Endothelial cell of umbilical vein (primary cell): ENCODE measurements at regions of chr22 and their contacts with region 1.

Region 1: DNA sequence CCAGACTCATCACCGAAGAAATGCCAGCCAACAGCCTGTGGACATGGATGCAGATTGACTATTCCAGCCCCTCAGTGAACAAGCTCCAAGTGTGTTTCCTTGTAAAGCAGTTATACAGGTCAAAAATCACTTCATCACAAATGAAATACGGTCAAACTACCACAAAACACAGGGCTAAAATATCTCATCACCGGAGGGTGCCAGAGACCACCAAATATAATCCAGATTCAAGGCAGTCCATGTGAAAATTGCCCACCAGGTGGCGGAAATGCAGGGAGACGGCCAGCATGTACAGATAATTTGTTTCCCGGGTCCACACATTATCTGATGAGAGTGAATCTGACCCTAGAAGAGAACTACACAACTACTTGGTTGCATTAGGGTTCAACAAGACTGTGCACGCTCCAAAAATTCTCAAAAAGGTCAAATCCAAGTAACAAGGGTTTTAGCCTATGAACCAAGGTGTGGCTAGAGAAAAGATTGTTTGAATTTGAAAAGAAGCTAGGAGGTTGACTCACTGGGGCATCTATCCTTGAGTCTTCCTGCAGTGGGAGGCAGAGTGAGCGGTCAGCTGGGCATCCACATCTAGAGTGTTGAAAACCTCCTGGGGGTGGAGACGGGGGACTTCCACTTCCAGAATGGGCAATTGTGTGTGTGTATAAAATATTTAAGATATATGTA is 71.7 kb downstream of the IGLL5 start:
- DNase-seq: peak; percentile 71
- H3K4me3 ChIP-seq: no peak overlapping the region
- H3K27ac ChIP-seq: no peak overlapping the region
- H3K4me1 ChIP-seq: no peaks in the 10 kb centered on the region
- H3K27me3 ChIP-seq: peaks cover 9 to 17% of the 10 kb centered on the region in 2 experiments
- CTCF ChIP-seq: peak; percentile 70 to 81
- POLR2A ChIP-seq: no peak

Region 2: GRCh38 chr22:22787786-22788459 is 171.4 kb before region 1 on chr22:
- CTCF ChIA-PET with region 1: interaction called, 11 read pairs
- POLR2A ChIA-PET with region 1: no interaction called
- dilution Hi-C with region 1: no loop called
- intact Hi-C with region 1: loop called (anchors 1 kb)
- DNase-seq: peak; percentile 34
- H3K4me3 ChIP-seq: no peak overlapping the region
- H3K27ac ChIP-seq: no peak overlapping the region
- H3K4me1 ChIP-seq: no peaks in the 10 kb centered on the region
- H3K27me3 ChIP-seq: peaks cover 0 to 5% of the 10 kb centered on the region in 2 experiments
- CTCF ChIP-seq: peak; percentile 80 to 91
- POLR2A ChIP-seq: no peak

Region 3: DNA sequence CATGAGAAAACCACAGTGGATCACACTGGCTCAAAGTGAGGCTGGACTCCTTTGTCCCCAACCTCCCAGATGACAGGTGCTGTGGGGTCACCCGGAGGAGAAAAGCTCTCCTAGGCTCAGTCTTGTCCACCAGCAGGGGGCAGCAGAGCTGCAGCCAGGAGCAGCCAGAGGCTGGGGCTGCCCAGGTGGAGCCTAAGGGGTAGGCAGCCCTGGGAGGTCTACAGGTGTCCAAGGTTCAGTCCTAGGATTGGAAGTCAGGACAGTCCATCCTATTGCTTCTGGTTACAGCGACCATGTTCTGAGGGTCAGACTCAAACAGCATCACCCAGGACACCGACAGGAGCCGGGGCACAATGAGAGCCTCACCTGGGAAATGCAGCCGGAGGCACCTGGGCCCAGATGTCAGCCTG is 149.3 kb before region 1 on chr22:
- CTCF ChIA-PET with region 1: interaction called, 16 read pairs
- POLR2A ChIA-PET with region 1: no interaction called
- dilution Hi-C with region 1: no loop called
- intact Hi-C with region 1: loop called (anchors 1 kb)
- DNase-seq: peak; percentile 7
- H3K4me3 ChIP-seq: no peak overlapping the region
- H3K27ac ChIP-seq: no peak overlapping the region
- H3K4me1 ChIP-seq: no peaks in the 10 kb centered on the region
- H3K27me3 ChIP-seq: peaks cover 8 to 16% of the 10 kb centered on the region in 2 experiments
- CTCF ChIP-seq: peak; percentile 80 to 82
- POLR2A ChIP-seq: no peak

Region 4: GRCh38 chr22:22855617-22856308 is 103.5 kb before region 1 on chr22:
- CTCF ChIA-PET with region 1: interaction called, 54 read pairs
- POLR2A ChIA-PET with region 1: no interaction called
- dilution Hi-C with region 1: no loop called
- intact Hi-C with region 1: no loop called
- DNase-seq: no peak
- H3K4me3 ChIP-seq: no peak overlapping the region
- H3K27ac ChIP-seq: no peak overlapping the region
- H3K4me1 ChIP-seq: no peaks in the 10 kb centered on the region
- H3K27me3 ChIP-seq: peaks cover 0 to 5% of the 10 kb centered on the region in 2 experiments
- CTCF ChIP-seq: peak; percentile 28 to 56
- POLR2A ChIP-seq: no peak

Region 5: DNA sequence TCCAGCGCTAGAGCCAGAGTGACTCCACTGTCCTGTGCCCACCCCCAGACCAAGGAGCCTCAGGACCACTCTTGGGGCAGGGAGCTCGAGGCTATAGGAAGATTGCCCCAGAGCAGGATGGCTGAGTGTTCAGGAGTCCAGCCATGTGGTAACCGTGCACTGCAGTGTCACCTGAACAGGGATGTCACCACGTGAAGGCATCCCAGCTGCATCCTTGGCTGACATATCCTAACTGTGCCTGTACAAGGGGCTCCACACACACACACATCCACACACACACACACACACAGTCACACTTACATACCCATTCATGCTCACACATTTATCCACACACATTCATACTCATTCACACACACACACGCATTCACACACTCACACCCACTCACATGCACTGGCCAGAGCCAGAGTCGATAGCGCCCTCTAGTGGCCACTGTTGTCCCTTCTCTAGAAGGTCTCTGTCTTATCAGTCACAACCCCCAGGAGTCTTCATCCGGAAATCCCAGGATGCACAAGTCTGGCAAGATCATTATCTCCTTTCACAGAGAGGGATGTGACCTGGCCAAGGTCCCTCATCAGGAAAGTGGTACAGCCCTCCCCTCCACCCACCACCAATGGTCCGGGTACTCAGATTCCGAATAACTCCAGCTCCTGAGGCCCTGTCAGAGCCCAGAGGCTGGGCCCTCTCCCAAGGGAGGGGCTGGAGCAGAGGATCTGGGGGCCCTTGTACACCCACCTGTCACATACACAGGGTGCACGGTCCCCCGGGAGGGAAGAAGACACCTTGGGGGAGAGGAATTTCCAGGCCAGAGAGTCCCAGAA is 16.6 kb before region 1 on chr22:
- CTCF ChIA-PET with region 1: interaction called, 10 read pairs
- POLR2A ChIA-PET with region 1: no interaction called
- dilution Hi-C with region 1: no loop called
- intact Hi-C with region 1: no loop called
- DNase-seq: peak; percentile 41
- H3K4me3 ChIP-seq: no peak overlapping the region
- H3K27ac ChIP-seq: no peak overlapping the region
- H3K4me1 ChIP-seq: no peaks in the 10 kb centered on the region
- H3K27me3 ChIP-seq: no peaks in the 10 kb centered on the region
- CTCF ChIP-seq: peak; percentile 81 to 83
- POLR2A ChIP-seq: no peak

Region 6: GRCh38 chr22:22976033-22976922 is 17.0 kb after region 1 on chr22:
- CTCF ChIA-PET with region 1: interaction called, 11 read pairs
- POLR2A ChIA-PET with region 1: no interaction called
- dilution Hi-C with region 1: no loop called
- intact Hi-C with region 1: no loop called
- DNase-seq: no peak
- H3K4me3 ChIP-seq: no peak overlapping the region
- H3K27ac ChIP-seq: no peak overlapping the region
- H3K4me1 ChIP-seq: no peaks in the 10 kb centered on the region
- H3K27me3 ChIP-seq: peaks cover 3 to 8% of the 10 kb centered on the region in 2 experiments
- CTCF ChIP-seq: no peak
- POLR2A ChIP-seq: no peak

Region 7: DNA sequence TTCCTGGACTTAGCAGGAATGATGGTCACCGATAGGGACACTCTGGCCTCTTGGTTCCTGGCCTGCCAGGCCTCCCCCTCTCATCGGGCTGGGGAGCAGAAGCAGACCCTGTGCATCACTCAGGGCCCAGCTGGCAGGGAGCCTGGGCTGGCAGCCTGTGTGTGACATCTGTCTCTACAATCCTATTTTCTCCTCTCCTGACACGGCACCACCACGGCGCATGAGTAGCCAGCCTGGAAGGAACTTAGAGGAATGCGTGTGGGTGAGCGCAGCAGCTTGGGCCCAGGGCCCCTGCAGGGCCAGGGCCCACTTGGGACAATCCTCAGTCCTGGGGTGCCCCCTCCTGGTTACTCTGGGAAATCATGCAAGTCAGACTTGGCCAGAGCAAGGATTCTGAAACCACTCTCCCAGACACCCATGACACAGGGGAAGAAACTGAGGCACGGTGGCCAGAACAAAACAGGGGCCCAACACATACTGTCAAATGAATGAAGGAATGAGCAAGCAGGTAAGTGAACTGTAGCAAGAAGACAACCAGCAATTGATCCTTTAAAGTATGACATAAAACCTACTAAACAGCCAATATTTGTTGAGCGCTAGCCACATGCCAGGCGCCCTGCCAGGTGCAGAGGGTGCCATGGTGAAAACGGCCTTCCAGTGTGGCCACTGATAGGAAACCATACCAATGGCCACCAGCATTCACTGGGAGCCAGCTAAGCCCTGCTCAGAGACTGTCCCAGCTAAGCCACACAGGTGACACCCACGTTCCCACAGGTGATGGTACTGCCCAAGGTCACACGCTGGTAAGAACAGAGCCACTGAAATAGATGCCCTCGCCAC is 169.2 kb after region 1 on chr22:
- CTCF ChIA-PET with region 1: interaction called, 401 read pairs
- POLR2A ChIA-PET with region 1: no interaction called
- dilution Hi-C with region 1: no loop called
- intact Hi-C with region 1: loop called (anchors 1 kb)
- DNase-seq: peak; percentile 64
- H3K4me3 ChIP-seq: no peak overlapping the region
- H3K27ac ChIP-seq: no peak overlapping the region
- H3K4me1 ChIP-seq: no peaks in the 10 kb centered on the region
- H3K27me3 ChIP-seq: peaks cover 3 to 4% of the 10 kb centered on the region in 2 experiments
- CTCF ChIP-seq: peak; percentile 70 to 76
- POLR2A ChIP-seq: no peak